IMR-90 (cell line): ENCODE measurements at regions of chr3 and their contacts with region 1.

Region 1: DNA sequence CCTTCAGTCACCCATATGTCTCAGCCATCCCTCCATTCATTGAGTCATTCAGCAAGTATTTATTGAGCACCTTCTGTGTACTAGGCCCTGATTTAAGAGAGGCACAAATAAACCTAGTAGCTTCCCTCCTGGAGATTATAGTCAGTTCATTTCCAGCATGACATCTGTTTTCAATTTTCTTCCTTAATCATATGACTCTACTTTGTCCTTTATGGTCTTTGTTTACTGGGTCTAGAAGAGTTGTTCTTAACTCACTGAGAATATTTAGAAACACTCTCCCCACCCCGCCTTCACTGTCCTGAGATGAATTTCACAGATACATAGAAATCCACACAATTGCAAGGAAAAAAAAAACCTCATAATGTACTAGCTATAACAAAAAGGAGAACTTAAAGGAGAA is 44.8 kb upstream of the ADAMTS9 start:
- DNase-seq: peak; percentile 2
- ATAC-seq: peak; percentile 40; the same call in 1 of the 2 replicates
- H3K4me3 ChIP-seq: no peak overlapping the region
- H3K27ac ChIP-seq: no peak overlapping the region
- H3K4me1 ChIP-seq: no peaks in the 10 kb centered on the region
- H3K27me3 ChIP-seq: no peaks in the 10 kb centered on the region
- CTCF ChIP-seq: no peak
- POLR2A ChIP-seq: no peak
- RAD21 ChIP-seq: no peak

Region 2: GRCh38 chr3:65914740-65915367 is 1182.3 kb after region 1 on chr3:
- CTCF ChIA-PET with region 1: no interaction called
- POLR2A ChIA-PET with region 1: interaction called, 14 read pairs
- dilution Hi-C with region 1: no loop called
- in situ Hi-C with region 1: no loop called
- intact Hi-C with region 1: no loop called
- DNase-seq: no peak
- ATAC-seq: no peak; the same call in 1 of the 2 replicates
- H3K4me3 ChIP-seq: no peak overlapping the region
- H3K27ac ChIP-seq: no peak overlapping the region
- H3K4me1 ChIP-seq: peaks cover 5% of the 10 kb centered on the region; the same call in 1 of the 2 replicates
- H3K27me3 ChIP-seq: no peaks in the 10 kb centered on the region
- CTCF ChIP-seq: 0 out of 2 replicates have a peak, but pooled peaks have one; percentile 19
- POLR2A ChIP-seq: no peak
- RAD21 ChIP-seq: peak; percentile 39; the same call in 1 of the 2 replicates